Common myeloid progenitor, CD34-positive (primary cell): ENCODE measurements at regions of chr1 and their contacts with region 1.

Region 1: DNA sequence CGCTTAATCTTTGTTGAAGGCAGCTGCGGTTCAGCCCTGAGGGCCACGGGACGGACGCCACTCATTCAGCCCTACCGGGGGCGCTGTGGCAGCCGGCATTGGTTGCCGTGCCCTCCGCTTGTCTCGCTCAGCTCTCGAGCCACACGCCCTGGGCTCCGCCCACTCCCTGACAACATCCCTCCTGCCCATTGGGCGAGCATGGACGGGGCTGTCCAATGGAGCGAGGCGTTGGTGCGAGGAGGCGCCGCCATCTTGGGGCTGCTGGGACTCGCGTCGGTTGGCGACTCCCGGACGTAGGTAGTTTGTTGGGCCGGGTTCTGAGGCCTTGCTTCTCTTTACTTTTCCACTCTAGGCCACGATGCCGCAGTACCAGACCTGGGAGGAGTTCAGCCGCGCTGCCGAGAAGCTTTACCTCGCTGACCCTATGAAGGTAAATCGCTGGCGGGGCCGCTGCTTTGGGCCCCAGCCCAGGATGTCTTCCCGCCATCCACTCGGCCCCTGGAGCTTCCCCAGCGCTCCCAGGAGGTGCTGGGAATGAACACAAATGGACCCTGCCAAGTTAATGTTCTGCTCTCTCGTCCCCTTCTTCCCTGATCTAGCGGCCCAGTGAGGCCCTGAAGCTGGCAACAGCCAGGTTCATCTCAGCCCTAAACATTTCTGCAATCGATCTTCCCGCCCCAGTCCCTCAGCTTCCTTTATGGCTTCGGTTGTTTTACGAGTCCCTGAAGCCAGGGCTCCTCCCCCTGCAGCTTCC is at the start of gene SRP9:
- DNase-seq: peak; percentile 99 to 100 (median 99)
- H3K4me3 ChIP-seq: peak within 1 kb of the TSS; percentile 87 to 99 (median 95)
- H3K27ac ChIP-seq: peak within 1 kb of the TSS; percentile 98
- H3K4me1 ChIP-seq: peaks cover 22 to 41% (median 33%) of the 10 kb centered on the region in 4 experiments
- H3K27me3 ChIP-seq: no peaks in the 10 kb centered on the region

Region 2: DNA sequence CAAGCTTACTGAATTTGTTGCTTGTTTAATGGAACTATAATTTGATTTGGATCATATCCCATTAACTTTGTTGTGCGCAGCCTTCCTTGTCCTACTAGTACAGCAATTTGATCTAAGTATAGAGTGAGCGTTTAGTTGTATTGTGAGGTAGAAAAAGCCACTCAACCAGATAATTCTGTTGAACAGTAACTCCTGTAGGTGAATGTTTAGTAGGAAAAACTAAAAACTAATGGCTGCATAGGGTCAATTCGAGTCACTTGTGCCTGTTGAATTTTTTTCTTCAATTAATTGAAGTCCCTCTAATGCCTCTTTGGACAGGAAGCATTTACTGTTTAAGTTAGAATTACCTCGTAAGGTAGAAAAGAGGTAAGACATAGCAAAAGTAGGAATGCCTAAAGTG is 17.2 kb after region 1 on chr1:
- CTCF ChIA-PET with region 1: interaction called, 10 read pairs
- POLR2A ChIA-PET with region 1: no interaction called
- DNase-seq: no peak
- H3K4me3 ChIP-seq: no peak overlapping the region
- H3K27ac ChIP-seq: no peak overlapping the region
- H3K4me1 ChIP-seq: no peaks in the 10 kb centered on the region
- H3K27me3 ChIP-seq: no peaks in the 10 kb centered on the region

Region 3: GRCh38 chr1:225845571-225846259 is 68.0 kb after region 1 on chr1:
- CTCF ChIA-PET with region 1: interaction called, 11 read pairs
- POLR2A ChIA-PET with region 1: no interaction called
- DNase-seq: peak; percentile 53 to 70 (median 68)
- H3K4me3 ChIP-seq: no peak overlapping the region
- H3K27ac ChIP-seq: no peak overlapping the region
- H3K4me1 ChIP-seq: peaks cover 0 to 6% (median 2%) of the 10 kb centered on the region in 4 experiments
- H3K27me3 ChIP-seq: no peaks in the 10 kb centered on the region